Aorta (tissue), 5 donors: ENCODE measurements at regions of chr3 and their contacts with region 1.

Region 1: GRCh38 chr3:196528639-196529233 is 13.6 kb upstream of the SMCO1 start:
- DNase-seq: peak; percentile 75 to 94
- ATAC-seq: peak; percentile 95
- H3K4me3 ChIP-seq: peak overlapping the region in 1 of 2 donors; percentile 28
- H3K27ac ChIP-seq: no peak overlapping the region
- H3K4me1 ChIP-seq: no peaks in the 10 kb centered on the region
- H3K27me3 ChIP-seq: no peaks in the 10 kb centered on the region

Region 2: DNA sequence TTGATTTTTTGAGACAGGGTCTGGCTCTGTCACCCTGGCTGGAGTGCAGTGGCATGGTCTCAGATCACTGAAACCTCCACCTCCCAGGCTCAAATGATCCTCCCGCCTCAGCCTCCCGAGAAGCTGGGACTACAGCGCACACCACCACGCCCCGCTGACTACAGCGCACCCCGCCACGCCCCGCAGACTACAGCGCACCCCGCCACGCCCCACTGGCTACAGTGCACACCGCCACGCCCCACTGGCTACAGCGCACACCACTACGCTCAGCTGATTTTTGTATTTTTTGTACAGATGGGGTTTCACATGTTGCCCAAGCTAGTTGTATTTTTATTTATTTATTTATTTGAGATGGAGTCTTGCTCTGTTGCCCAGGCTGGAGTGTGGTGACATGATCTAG is 276.8 kb before region 1 on chr3:
- intact Hi-C with region 1: loop called (anchors 10 kb)
- DNase-seq: no peak
- ATAC-seq: no peak
- H3K4me3 ChIP-seq: no peak overlapping the region
- H3K27ac ChIP-seq: no peak overlapping the region
- H3K4me1 ChIP-seq: no peaks in the 10 kb centered on the region
- H3K27me3 ChIP-seq: no peaks in the 10 kb centered on the region